Activated naive CD4-positive, alpha-beta T cell treated with anti-CD3 and anti-CD28 coated beads for 36 hours (primary cell): ENCODE measurements at regions of chr5 and their contacts with region 1.

Region 1: DNA sequence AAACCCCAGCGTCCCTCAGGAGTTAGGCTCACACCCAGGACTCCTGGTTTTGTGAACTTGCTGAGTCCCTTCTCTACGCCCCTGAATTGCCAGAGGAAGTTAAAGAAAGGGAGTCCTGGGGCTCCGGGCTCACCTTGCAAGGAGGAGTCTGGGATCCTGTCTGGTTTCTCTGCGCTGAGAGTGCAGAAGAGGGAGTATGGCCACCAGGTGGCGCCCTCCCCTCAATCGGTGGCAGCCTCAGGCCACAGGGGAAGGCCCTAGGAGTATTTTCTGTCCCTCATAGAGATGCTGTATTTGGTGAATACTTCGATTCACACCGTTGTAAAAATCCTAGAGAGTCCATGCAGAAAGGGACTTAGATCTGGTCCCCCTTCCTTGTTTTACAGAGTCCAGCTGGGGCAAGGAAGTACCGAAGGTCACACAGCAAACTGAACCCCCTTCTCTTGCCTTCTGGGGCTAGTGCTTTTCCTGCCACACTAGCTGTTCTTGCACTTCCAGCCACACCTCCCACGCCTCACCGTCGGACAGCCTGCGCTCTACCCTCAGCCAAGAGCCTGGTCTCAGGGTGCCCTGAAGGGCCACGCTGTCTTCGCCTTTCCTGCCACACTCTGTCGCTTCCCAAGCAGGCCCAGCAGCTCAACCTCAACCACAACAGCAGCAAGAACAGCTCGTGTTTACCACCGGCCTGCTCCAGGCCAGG is 10.2 kb downstream of the HAND1 start:
- DNase-seq: peak; percentile 88
- H3K4me3 Mint-ChIP-seq: no peak overlapping the region
- H3K27ac Mint-ChIP-seq: no peak overlapping the region
- H3K4me1 Mint-ChIP-seq: peaks cover 6% of the 10 kb centered on the region
- H3K27me3 Mint-ChIP-seq: peaks cover 36% of the 10 kb centered on the region

Region 2: GRCh38 chr5:153974131-153974812 is 493.5 kb before region 1 on chr5:
- CTCF ChIA-PET with region 1: interaction called, 3 read pairs
- intact Hi-C with region 1: loop called (anchors 1 kb)
- DNase-seq: peak; percentile 58
- H3K4me3 Mint-ChIP-seq: no peak overlapping the region
- H3K27ac Mint-ChIP-seq: no peak overlapping the region
- H3K4me1 Mint-ChIP-seq: no peaks in the 10 kb centered on the region
- H3K27me3 Mint-ChIP-seq: peaks cover 3% of the 10 kb centered on the region

Region 3: GRCh38 chr5:154487541-154487940 is 19.7 kb after region 1 on chr5:
- CTCF ChIA-PET with region 1: interaction called, 13 read pairs
- intact Hi-C with region 1: no loop called
- DNase-seq: peak; percentile 71
- H3K4me3 Mint-ChIP-seq: no peak overlapping the region
- H3K27ac Mint-ChIP-seq: no peak overlapping the region
- H3K4me1 Mint-ChIP-seq: peaks cover 39% of the 10 kb centered on the region
- H3K27me3 Mint-ChIP-seq: peaks cover 76% of the 10 kb centered on the region

Region 4: DNA sequence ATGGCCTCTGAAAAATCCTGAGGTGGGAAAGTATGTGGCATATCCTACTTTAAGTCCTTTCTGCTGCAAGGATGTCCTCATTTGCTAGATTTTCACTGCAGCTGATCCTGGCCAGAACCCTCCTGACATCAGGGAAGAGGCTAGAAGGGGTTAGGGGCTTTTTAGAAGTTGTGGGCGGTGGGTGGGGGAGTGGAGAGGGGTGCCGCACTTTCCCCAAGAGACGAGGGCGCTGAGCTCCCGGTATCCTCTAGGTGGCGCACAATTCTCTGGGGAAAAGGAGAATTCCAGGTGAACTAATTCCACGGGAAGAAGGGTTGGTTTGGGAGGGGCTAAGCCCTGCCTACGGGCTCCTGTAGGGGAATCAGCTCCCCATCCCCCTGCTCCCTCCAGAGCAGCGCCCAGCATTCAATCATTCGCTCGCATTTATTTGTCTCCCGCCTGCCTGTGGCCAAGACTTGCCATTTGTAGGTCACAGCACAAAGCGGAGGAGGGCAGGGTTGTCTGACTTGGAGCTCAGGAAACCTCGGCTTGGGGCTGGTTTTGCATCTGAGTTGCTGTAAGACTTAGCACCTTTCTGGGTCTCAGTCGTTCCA is 53.2 kb after region 1 on chr5:
- CTCF ChIA-PET with region 1: interaction called, 12 read pairs
- intact Hi-C with region 1: no loop called
- DNase-seq: peak; percentile 30
- H3K4me3 Mint-ChIP-seq: no peak overlapping the region
- H3K27ac Mint-ChIP-seq: no peak overlapping the region
- H3K4me1 Mint-ChIP-seq: peaks cover 1% of the 10 kb centered on the region
- H3K27me3 Mint-ChIP-seq: peaks cover 35% of the 10 kb centered on the region

Region 5: DNA sequence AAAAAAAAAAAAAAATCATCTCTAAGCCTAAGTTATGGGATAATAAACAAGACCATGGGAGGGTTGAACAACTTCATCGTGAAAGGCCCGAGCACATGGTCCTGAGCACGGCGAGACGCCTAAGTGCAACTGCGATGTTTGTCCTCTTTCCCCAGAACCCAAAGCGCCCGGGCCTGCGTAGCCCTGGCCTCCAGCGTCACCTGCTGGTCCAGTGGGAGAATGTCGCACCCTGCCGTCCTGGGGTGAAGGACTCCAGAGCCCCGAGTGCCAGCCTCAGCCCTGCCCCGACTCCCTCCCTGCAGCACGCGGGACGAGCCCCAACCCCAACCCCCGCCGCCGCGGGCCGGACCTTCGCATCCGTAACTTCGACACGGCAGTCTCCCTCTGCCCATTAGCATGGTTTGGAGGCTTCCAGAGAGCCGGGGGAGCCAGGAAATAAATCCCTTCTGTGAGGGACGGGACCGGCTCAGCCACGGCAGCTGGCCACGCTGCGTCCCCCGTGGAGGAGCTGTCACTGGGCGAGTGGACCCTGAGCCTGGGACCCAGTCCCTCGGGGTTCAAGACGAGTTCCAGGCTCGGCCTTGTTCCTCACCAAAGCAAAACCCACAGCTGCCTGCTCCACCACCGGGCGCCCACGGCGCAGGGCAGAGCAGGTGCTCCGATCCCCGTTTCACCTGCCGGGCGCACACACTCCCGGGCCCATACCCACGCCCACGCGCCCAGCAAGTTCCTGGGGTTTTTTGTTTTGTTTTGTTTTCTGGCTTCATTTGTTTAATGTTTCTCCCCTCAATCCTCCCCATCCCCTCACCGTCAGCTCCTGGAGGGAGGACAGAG is 142.7 kb after region 1 on chr5:
- CTCF ChIA-PET with region 1: interaction called, 60 read pairs
- intact Hi-C with region 1: loop called (anchors 1 kb)
- DNase-seq: peak; percentile 84
- H3K4me3 Mint-ChIP-seq: no peak overlapping the region
- H3K27ac Mint-ChIP-seq: no peak overlapping the region
- H3K4me1 Mint-ChIP-seq: peaks cover 6% of the 10 kb centered on the region
- H3K27me3 Mint-ChIP-seq: peaks cover 53% of the 10 kb centered on the region

Region 6: GRCh38 chr5:155546075-155546474 is 1078.3 kb after region 1 on chr5:
- CTCF ChIA-PET with region 1: no interaction called
- intact Hi-C with region 1: no loop called
- DNase-seq: no peak
- H3K4me3 Mint-ChIP-seq: no peak overlapping the region
- H3K27ac Mint-ChIP-seq: no peak overlapping the region
- H3K4me1 Mint-ChIP-seq: no peaks in the 10 kb centered on the region
- H3K27me3 Mint-ChIP-seq: no peaks in the 10 kb centered on the region